MCF 10A (cell line): ENCODE measurements at regions of chr10 and their contacts with region 1.

Region 1: DNA sequence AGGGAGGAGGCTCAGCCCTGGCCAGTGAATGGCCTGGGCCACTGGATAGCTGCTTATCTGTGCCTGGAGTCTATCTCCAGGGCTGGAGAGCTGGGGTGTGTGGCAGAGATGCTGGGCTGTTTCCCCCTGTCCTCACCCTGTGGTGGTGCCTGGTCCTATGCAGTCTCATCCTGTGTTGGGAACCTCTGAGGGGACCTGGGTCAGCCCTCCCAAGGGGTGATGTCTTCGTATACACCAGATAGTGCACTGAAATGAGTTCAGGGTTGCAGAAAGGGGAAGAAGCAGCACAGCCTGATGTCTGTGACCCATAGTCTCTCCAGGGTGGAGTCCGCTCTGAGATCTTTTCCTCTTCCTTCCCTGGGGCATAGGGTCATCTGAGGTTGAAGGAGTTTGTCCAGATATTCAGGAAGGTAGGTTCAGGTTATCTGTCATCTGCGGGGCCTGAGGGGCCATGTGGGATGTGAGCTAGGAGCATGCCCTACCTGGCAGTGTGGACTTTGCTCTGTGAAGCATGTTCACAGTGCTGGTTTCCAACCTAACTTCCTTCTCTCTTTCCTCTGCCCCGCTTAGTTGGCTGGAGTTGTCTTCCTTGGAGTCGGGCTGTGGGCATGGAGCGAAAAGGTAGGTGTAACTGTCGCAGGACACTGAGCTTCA is 33.4 kb upstream of the SH2D4B start:
- DNase-seq: no peak
- H3K4me3 Mint-ChIP-seq: no peak overlapping the region
- H3K27ac Mint-ChIP-seq: peak overlapping the region; percentile 86
- H3K4me1 Mint-ChIP-seq: peaks cover 68% of the 10 kb centered on the region
- H3K27me3 Mint-ChIP-seq: no peaks in the 10 kb centered on the region
- CTCF ChIP-seq: no peak

Region 2: GRCh38 chr10:80429521-80429966 is 74.7 kb before region 1 on chr10:
- CTCF ChIA-PET with region 1: interaction called, 12 read pairs
- POLR2A ChIA-PET with region 1: interaction called, 4 read pairs
- intact Hi-C with region 1: no loop called
- DNase-seq: peak; percentile 95
- H3K4me3 Mint-ChIP-seq: peak overlapping the region; percentile 12
- H3K27ac Mint-ChIP-seq: peak overlapping the region; percentile 94
- H3K4me1 Mint-ChIP-seq: peaks cover 12% of the 10 kb centered on the region
- H3K27me3 Mint-ChIP-seq: no peaks in the 10 kb centered on the region
- CTCF ChIP-seq: no peak

Region 3: DNA sequence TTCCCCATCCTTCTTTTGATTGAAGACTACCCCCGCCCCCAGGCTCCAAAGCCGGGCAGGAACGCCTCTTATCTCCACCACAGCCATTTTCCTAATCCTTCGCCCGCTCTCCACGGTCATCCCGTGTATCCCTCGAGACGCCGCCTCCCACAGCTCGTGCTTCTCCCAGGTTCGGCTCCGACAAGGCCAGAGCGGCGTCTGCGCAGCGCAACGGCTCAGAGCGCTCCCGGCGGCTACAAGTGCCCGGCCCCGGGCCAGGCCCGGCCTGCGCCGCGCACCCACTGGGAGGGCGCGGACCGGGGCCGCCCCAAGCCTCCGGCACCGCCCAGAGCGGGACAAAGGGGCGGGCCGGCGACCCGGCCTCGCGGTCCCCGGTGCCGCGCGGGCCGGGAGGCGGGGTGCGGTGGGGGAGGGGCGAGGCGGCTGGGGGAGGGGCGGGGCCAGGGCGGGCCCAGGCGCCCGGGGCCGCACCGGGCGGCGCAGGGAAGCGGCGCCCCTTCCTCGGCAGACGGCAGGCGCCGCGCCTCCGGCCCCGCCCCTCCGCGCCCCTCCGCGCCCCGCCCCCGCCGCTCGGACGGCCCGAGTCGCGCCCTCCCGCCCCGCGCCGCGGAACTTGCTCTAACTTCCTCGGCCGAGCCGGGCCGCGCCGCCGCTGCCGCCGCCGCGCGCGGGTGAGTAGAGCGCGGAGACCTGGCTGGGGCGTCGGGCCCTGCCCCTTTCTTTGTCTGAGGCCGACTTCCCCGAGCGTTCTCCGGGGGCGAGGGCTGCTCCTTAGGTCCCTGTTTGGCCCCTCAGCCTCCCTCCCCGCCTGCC is 50.4 kb before region 1 on chr10 and contains the start of gene TSPAN14:
- CTCF ChIA-PET with region 1: interaction called, 923 read pairs
- POLR2A ChIA-PET with region 1: interaction called, 225 read pairs
- intact Hi-C with region 1: loop called (anchors 1 kb)
- DNase-seq: peak; percentile 71
- H3K4me3 Mint-ChIP-seq: peak within 1 kb of the TSS; percentile 79
- H3K27ac Mint-ChIP-seq: peak within 1 kb of the TSS; percentile 32
- H3K4me1 Mint-ChIP-seq: peaks cover 20% of the 10 kb centered on the region
- H3K27me3 Mint-ChIP-seq: no peaks in the 10 kb centered on the region
- CTCF ChIP-seq: no peak
- total RNA-seq, gene TSPAN14: 46.9 and 53.7 TPM in 2 replicates

Region 4: GRCh38 chr10:80472234-80473095 is 31.8 kb before region 1 on chr10:
- CTCF ChIA-PET with region 1: interaction called, 923 read pairs
- POLR2A ChIA-PET with region 1: interaction called, 205 read pairs
- intact Hi-C with region 1: no loop called
- DNase-seq: peak; percentile 93
- H3K4me3 Mint-ChIP-seq: peak overlapping the region; percentile 38
- H3K27ac Mint-ChIP-seq: peak overlapping the region; percentile 99
- H3K4me1 Mint-ChIP-seq: peaks cover 55% of the 10 kb centered on the region
- H3K27me3 Mint-ChIP-seq: no peaks in the 10 kb centered on the region
- CTCF ChIP-seq: no peak

Region 5: DNA sequence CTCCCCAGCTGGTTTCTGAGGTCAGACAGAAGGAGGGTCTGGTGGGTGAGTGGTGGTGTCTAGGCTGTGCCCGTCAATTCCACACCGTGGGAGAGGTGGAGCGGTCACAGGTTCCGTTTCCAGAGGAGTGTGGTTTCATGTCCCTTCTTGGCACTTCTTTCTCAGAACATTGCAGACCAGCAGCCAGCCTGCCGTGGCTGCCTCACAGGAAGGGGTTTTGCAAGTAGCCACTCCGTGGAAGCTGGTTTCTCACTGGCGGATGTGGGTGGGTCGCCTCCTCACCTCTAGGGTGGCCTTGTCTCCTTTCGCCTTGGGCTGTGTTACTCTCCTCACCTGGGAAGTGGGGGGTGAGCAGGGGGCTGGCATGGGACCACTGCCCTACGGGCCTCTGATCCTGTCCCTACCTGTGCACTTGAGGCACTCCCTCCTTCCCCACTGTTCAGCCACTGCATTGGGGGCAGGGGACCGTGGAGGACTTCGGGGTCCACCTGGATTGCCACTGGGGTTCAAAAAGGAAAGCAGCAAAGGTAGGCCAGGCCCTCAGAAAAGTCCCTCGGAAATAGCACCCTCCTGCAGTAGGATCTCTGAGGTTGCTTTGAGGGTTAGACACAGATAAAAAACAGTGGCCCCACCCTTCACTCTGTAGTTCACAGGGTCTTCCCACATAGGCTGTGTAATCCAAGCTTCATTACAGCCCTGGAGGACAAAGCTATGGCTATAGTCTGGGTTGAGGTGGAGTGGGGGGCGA is 16.3 kb before region 1 on chr10:
- CTCF ChIA-PET with region 1: interaction called, 27 read pairs
- POLR2A ChIA-PET with region 1: interaction called, 28 read pairs
- intact Hi-C with region 1: no loop called
- DNase-seq: no peak
- H3K4me3 Mint-ChIP-seq: no peak overlapping the region
- H3K27ac Mint-ChIP-seq: peak overlapping the region; percentile 90
- H3K4me1 Mint-ChIP-seq: peaks cover 45% of the 10 kb centered on the region
- H3K27me3 Mint-ChIP-seq: no peaks in the 10 kb centered on the region
- CTCF ChIP-seq: no peak

Region 6: DNA sequence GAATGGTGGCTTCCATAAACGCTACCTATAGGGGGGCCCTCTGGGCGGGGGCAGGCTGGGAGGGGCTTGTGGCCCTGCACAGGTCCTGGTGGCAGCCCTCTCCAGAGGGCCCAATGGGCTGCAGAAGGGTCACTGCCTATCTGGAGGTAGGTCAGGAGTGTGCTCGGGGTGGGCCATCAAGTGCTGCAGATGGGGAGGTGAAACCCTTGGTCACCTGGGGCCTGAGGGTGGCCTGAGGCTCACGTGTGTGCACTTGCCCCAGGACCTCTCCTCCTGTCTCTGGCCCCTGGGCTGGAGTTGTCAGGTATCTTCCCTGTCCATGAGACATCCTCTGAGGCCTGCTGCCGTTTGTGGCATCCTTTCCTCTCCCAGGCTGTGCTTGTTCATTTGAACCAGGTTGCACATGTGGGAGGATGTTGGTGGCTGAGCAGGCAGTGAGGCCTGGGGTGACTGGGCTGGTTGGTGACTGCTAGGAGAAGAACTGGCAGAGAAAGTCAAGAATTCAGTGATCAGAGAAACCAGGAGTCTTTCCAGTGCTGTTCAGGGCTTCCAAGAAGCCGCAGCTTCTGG is 12.3 kb after region 1 on chr10:
- CTCF ChIA-PET with region 1: interaction called, 21 read pairs
- POLR2A ChIA-PET with region 1: no interaction called
- intact Hi-C with region 1: no loop called
- DNase-seq: no peak
- H3K4me3 Mint-ChIP-seq: no peak overlapping the region
- H3K27ac Mint-ChIP-seq: no peak overlapping the region
- H3K4me1 Mint-ChIP-seq: peaks cover 3% of the 10 kb centered on the region
- H3K27me3 Mint-ChIP-seq: no peaks in the 10 kb centered on the region
- CTCF ChIP-seq: no peak

Region 7: GRCh38 chr10:80642661-80643060 is 138.4 kb after region 1 on chr10:
- CTCF ChIA-PET with region 1: no interaction called
- POLR2A ChIA-PET with region 1: no interaction called
- intact Hi-C with region 1: no loop called
- DNase-seq: no peak
- H3K4me3 Mint-ChIP-seq: no peak overlapping the region
- H3K27ac Mint-ChIP-seq: no peak overlapping the region
- H3K4me1 Mint-ChIP-seq: no peaks in the 10 kb centered on the region
- H3K27me3 Mint-ChIP-seq: peaks cover 57% of the 10 kb centered on the region
- CTCF ChIP-seq: no peak